Ascending aorta (tissue), 2 donors: ENCODE measurements at regions of chr18 and their contacts with region 1.

Region 1: DNA sequence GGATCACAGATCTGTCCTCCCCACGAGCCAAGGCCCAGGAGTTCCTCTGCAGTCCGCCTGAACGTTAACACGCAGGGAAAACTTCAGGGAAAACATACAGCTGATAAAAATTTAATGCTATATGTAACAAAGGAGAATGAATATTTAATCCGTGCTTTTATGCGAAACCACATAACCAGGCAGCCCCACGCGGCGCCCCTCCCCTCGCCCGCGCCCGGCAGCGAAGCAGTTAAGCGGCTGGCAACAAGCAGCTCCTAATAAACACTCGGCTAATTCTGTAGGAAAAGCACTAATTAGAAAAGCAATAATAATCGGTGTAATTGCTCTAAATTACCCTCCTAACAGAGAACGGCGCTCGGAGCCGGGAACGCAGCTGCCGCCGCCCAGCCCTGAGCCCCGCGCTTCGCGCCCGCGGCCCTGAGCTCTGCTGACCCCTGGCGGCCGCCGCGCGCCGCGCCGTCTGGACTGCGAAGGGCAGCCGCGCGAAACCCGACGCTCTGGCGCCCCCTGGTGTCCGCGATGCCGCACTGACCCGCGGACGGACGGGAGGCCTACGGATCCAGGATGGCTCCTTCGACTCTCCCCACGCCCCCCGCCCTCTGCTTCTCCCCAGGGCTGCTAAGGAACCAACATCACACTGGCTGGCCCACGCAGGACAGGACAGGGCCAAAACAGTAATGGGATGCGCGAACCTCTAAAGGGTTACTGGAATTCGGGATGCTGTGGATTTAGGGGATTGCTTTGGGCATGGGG is 181.4 kb downstream of the SMAD2 start:
- DNase-seq: peak in 1 of 2 donors; percentile 87
- H3K4me3 ChIP-seq: peak overlapping the region; percentile 44 to 57
- H3K27ac ChIP-seq: no peak overlapping the region
- H3K4me1 ChIP-seq: peaks cover 0 to 3% of the 10 kb centered on the region in 2 donors
- H3K27me3 ChIP-seq: no peaks in the 10 kb centered on the region
- CTCF ChIP-seq: peak; percentile 89 to 100 (median 96)

Region 2: DNA sequence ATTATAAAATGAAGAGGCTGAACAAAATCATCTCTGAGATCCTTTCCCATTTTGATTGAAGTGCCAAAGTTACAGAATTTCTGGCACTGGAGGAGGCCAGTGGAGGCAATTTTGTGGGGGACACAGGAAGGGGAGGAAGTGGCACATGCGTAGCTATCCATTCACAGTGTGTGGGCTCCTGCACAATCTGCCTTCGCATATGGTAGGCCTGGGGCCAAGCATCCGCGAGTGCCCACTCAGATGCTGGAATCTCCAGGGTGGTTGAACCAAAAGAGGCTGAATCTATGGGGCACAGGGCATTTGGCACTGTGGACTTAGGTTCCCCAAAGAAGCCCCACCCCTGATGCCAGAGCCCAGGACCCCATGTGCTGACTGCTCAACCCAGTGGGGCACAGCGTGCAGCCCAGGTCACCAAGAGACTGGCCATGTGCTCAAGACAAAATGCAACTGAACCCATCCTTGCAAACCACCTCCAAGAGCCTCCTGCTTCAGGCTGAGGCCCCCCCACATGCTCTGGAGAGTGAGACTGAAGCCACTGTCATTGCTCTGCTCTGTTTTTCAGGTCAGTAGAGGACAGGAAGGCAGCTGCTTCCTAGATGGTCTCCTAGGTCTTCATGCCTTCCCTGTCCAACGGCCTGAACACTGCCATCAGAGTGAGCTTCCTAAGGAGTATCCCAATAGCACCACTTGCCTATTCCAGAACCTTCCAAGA is 1020.6 kb before region 1 on chr18:
- intact Hi-C with region 1: no loop called
- DNase-seq: no peak
- H3K4me3 ChIP-seq: no peak overlapping the region
- H3K27ac ChIP-seq: no peak overlapping the region
- H3K4me1 ChIP-seq: no peaks in the 10 kb centered on the region
- H3K27me3 ChIP-seq: no peaks in the 10 kb centered on the region
- CTCF ChIP-seq: no peak

Region 3: GRCh38 chr18:47050468-47050867 is 698.6 kb before region 1 on chr18:
- intact Hi-C with region 1: loop called (anchors 5 kb)
- DNase-seq: no peak
- H3K4me3 ChIP-seq: no peak overlapping the region
- H3K27ac ChIP-seq: no peak overlapping the region
- H3K4me1 ChIP-seq: no peaks in the 10 kb centered on the region
- H3K27me3 ChIP-seq: no peaks in the 10 kb centered on the region
- CTCF ChIP-seq: peak in 2 of 3 experiments; percentile 44 to 52

Region 4: GRCh38 chr18:47100214-47100831 is 648.7 kb before region 1 on chr18:
- intact Hi-C with region 1: loop called (anchors 2 kb)
- DNase-seq: peak in 1 of 2 donors; percentile 66
- H3K4me3 ChIP-seq: no peak overlapping the region
- H3K27ac ChIP-seq: no peak overlapping the region
- H3K4me1 ChIP-seq: no peaks in the 10 kb centered on the region
- H3K27me3 ChIP-seq: no peaks in the 10 kb centered on the region
- CTCF ChIP-seq: peak; percentile 44 to 78 (median 54)

Region 5: DNA sequence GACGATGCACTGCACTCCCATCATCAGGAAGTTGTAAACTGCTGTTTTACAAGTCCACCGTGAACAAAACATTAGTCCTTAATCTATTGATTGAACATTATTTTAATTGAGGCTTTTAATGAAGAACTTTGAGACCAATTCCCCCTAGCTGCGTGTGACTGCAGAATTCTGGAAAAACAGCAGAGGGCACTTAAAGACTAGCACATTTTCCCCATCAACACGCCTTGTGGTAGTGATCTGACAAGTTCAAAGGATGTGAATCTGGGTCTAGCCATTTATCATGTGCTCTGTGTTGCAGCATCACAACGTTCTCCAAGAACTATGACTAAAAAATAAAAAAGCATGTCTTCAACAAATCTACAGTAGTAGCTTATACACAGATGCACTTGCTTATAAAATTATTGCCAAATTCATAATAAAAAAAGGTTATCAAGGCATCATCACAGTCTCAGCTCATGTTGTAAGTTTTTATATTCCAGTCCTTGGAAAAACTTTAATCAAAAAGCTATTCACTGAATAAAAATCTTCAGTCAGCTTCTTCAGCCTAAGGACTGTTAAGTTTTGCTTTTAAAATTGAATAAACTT is 533.4 kb before region 1 on chr18:
- intact Hi-C with region 1: loop called (anchors 5 kb)
- DNase-seq: no peak
- H3K4me3 ChIP-seq: no peak overlapping the region
- H3K27ac ChIP-seq: no peak overlapping the region
- H3K4me1 ChIP-seq: no peaks in the 10 kb centered on the region
- H3K27me3 ChIP-seq: no peaks in the 10 kb centered on the region
- CTCF ChIP-seq: peak in 2 of 3 experiments; percentile 18 to 34